Pancreas (tissue), 10 donors: ENCODE measurements at regions of chr18 and their contacts with region 1.

Region 1: DNA sequence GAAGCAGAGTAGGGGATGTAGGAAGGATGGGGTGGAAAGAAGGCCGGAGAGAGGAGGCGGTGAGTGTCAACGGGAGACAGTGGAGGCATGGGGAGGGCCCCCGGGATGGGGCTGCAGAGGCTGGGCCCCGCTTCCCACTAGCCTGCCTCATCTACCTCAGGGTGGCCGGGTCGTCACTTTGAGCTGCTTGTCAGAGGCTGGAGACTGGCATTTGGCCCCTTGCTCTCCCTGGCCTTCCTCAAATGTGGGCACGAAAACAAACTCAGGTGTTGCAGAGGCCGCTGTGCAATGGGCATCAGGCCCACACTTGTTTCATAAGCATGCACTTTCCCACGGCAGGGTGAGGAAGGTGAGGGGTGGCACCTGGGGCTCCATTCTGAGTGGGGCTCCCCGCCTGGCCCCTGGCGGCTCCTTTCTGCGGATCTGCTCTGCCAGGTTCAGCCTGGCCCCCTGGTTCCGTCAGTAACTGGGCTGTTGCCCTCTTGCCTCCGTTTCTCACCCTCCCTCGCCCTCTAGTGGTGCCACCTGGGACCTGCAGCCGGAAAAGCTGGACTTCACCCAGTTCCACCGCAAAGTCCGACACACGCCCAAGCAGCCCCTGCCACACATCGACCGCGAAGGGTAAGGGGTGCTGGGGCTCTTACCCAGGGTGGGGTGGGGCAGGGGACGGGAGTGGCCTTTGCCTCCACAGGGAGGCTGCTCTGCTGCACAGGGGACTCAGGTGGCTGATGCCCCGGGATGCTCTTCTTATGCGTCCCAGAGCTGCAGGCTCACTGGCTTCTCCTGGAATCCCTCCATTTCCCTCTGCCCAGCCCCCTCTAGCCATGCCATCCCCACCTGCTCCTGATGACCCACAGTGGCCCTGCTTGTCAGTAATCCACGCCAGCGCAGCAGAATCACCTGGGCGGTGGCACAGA is 125.4 kb downstream of the CTIF start:
- DNase-seq: peak; percentile 59 to 94 (median 82)
- ATAC-seq: peak; percentile 76 to 83 (median 83)
- H3K4me3 ChIP-seq: no peak overlapping the region
- H3K27ac ChIP-seq: peak overlapping the region in 1 of 4 donors; percentile 22
- H3K4me1 ChIP-seq: no peaks in the 10 kb centered on the region
- H3K27me3 ChIP-seq: no peaks in the 10 kb centered on the region
- CTCF ChIP-seq: peak; percentile 82 to 90 (median 87)

Region 2: GRCh38 chr18:48470484-48471180 is 193.6 kb before region 1 on chr18:
- intact Hi-C with region 1: loop called in 2 of 3 experiments (anchors 5 kb)
- DNase-seq: no peak
- ATAC-seq: peak in 2 of 4 donors; percentile 25 to 47
- H3K4me3 ChIP-seq: no peak overlapping the region
- H3K27ac ChIP-seq: no peak overlapping the region
- H3K4me1 ChIP-seq: no peaks in the 10 kb centered on the region
- H3K27me3 ChIP-seq: no peaks in the 10 kb centered on the region
- CTCF ChIP-seq: no peak

Region 3: DNA sequence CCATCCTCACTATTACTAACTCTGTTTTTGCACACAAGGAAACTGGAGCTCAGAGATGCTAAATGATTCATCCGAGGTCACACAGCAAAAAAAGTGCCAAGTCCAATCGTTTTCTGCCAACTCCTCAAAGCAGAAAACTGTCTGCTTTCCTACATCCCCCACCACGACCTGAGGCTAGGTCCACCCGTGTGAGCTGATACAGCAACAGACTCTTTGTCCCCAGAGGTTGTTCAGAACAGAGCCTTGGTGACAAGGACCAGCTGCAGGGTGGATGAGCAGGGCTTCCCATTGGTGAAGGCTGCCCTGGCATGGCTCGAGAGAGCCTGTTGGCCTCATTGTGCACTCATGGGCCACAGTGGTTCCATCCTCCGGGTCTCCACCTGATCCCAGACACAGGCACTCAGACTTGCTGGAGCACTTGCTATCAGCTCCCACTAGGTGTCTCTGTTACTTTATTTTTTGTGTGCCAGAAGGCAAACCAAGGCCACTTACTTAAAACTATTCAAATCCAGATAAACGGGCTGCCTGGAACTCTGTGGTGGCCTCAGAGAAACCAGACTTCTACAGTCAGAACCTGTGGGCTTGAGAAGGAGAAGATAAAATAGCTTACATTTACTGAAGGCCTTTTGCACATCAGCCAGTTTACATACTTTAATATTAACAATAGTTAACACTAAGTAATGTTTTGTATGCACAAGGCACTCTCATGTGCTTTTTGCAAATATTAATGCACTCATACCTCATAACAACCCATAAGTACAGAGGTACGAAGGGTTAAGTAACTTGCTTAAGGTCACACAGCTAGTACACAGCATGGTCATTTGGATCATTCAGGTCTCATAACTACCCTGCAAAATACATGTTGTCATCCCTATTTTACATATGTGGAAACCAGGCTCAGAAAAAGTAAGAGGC is 188.3 kb before region 1 on chr18:
- intact Hi-C with region 1: loop called in 2 of 3 experiments (anchors 5 kb)
- DNase-seq: peak in 4 of 6 donors; percentile 37 to 72 (median 46)
- ATAC-seq: peak; percentile 86 to 99 (median 98)
- H3K4me3 ChIP-seq: no peak overlapping the region
- H3K27ac ChIP-seq: no peak overlapping the region
- H3K4me1 ChIP-seq: peaks cover 0 to 3% (median 0%) of the 10 kb centered on the region in 3 donors
- H3K27me3 ChIP-seq: no peaks in the 10 kb centered on the region
- CTCF ChIP-seq: peak; percentile 51 to 79 (median 70)